ENCODE measurements at regions of chr4 and their contacts with region 1.

Region 1: DNA sequence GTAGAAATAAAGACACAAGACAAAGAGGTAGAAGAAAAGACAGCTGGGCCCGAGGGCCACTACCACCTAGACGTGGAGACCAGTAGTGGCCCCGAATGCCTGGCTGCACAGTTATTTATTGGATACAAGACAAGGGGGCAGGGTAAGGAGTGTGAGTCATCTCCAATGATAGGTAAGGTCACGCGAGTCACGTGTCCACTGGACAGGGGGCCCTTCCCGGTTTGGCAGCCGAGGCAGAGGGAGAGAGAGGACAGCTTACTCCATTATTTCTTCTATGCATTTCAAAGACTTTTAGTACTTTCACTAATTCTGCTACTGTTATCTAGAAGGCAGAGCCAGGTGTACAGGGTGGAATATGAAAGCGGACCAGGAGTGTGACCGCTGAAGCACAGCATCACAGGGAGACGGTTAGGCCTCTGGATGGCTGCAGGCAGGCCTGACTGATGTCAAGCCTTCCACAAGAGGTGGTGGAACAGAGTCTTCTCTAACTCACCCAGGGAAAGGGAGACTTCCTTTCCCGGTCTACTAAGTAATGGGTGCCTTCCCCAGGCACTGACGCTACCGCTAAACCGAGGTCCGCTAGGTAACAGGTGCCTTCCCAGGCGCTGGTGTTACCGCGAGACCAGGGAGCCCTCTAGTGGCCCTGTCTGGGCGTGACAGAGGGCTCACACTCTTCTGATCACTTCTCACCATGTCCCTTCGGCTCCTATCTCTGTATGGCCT is 44.9 kb downstream of the ZBTB49 start:
- DNase-seq: peak; percentile 52
- H3K4me3 ChIP-seq: no peak overlapping the region
- H3K27ac ChIP-seq: no peak overlapping the region
- H3K4me1 ChIP-seq: no peaks in the 10 kb centered on the region
- H3K27me3 ChIP-seq: peaks cover 0 to 3% of the 10 kb centered on the region in 2 experiments
- CTCF ChIP-seq: peak; percentile 66 to 87
- POLR2A ChIP-seq: no peak

Region 2: GRCh38 chr4:3640587-3640962 is 694.4 kb before region 1 on chr4:
- CTCF ChIA-PET with region 1: no interaction called
- POLR2A ChIA-PET with region 1: no interaction called
- dilution Hi-C with region 1: no loop called
- intact Hi-C with region 1: no loop called
- DNase-seq: no peak
- H3K4me3 ChIP-seq: no peak overlapping the region
- H3K27ac ChIP-seq: no peak overlapping the region
- H3K4me1 ChIP-seq: no peaks in the 10 kb centered on the region
- H3K27me3 ChIP-seq: no peaks in the 10 kb centered on the region
- CTCF ChIP-seq: no peak
- POLR2A ChIP-seq: no peak

Region 3: DNA sequence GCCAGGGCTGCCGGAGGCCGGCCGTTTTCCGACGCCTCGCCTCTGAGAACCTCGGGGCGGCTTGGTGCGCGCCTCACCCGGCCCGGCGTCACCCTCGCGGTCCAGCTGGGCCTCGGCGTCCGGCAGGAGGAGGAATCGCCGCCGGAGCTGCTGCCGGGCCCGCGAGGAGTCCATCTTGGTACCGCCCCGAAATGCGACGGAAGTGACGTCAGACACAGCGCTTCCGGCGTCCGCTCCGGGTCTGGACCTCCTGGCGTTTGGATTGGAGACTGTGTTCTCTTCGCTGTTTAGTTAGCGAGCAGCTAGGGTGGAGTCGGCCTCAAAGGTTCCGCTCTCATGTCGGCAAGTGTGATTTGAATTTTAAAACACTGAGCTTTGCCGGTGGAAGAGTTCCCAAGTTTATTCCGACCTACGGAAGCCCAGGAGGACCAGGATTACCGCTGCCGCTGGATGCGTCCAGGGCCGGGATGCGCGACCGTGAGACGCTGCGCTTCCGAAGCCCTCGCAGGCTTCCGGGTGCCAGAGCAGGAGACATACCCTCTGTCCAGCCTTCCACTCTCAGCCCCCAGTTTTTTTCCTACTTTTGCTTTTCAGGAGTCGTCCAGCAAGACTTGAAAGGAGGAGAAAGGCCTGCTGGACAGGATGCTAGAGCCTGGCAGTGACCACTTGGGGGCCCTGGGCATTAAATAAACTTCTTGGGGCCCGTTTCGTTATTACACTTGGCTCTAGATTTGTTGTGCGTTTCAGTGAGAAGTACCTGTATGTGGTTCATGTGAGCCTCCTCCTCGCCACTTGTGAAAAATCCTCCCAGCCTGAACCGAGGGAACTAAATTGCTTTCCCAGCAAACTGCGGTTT is 86.7 kb before region 1 on chr4 and contains the start of gene TMEM128:
- CTCF ChIA-PET with region 1: interaction called, 41 read pairs
- POLR2A ChIA-PET with region 1: no interaction called
- dilution Hi-C with region 1: no loop called
- intact Hi-C with region 1: loop called (anchors 1 kb)
- DNase-seq: peak; percentile 93
- H3K4me3 ChIP-seq: peak within 1 kb of the TSS; percentile 87 to 94 (median 88)
- H3K27ac ChIP-seq: peak within 1 kb of the TSS; percentile 99
- H3K4me1 ChIP-seq: peaks cover 14% of the 10 kb centered on the region
- H3K27me3 ChIP-seq: no peaks in the 10 kb centered on the region
- CTCF ChIP-seq: peak; percentile 16 to 34
- POLR2A ChIP-seq: peak; percentile 86
- total RNA-seq, gene TMEM128: 11.5 and 13.2 TPM in 2 replicates

Region 4: GRCh38 chr4:4254666-4255065 is 80.3 kb before region 1 on chr4:
- CTCF ChIA-PET with region 1: interaction called, 89 read pairs
- POLR2A ChIA-PET with region 1: no interaction called
- dilution Hi-C with region 1: no loop called
- intact Hi-C with region 1: loop called (anchors 1 kb)
- DNase-seq: no peak
- H3K4me3 ChIP-seq: no peak overlapping the region
- H3K27ac ChIP-seq: no peak overlapping the region
- H3K4me1 ChIP-seq: no peaks in the 10 kb centered on the region
- H3K27me3 ChIP-seq: no peaks in the 10 kb centered on the region
- CTCF ChIP-seq: no peak
- POLR2A ChIP-seq: no peak

Region 5: GRCh38 chr4:4260253-4260652 is 74.7 kb before region 1 on chr4:
- CTCF ChIA-PET with region 1: interaction called, 89 read pairs
- POLR2A ChIA-PET with region 1: interaction called, 3 read pairs
- dilution Hi-C with region 1: no loop called
- intact Hi-C with region 1: loop called (anchors 1 kb)
- DNase-seq: peak; percentile 50
- H3K4me3 ChIP-seq: no peak overlapping the region
- H3K27ac ChIP-seq: no peak overlapping the region
- H3K4me1 ChIP-seq: no peaks in the 10 kb centered on the region
- H3K27me3 ChIP-seq: no peaks in the 10 kb centered on the region
- CTCF ChIP-seq: peak; percentile 38 to 44
- POLR2A ChIP-seq: no peak

Region 6: GRCh38 chr4:4289941-4290850 is 44.8 kb before region 1 on chr4 and contains the starts of genes LYAR and ZBTB49:
- CTCF ChIA-PET with region 1: interaction called, 4 read pairs
- POLR2A ChIA-PET with region 1: no interaction called
- dilution Hi-C with region 1: no loop called
- intact Hi-C with region 1: loop called (anchors 2 kb)
- DNase-seq: peak; percentile 94
- H3K4me3 ChIP-seq: peak within 1 kb of the TSS; percentile 81 to 94 (median 89)
- H3K27ac ChIP-seq: peak within 1 kb of the TSS; percentile 41
- H3K4me1 ChIP-seq: peaks cover 17% of the 10 kb centered on the region
- H3K27me3 ChIP-seq: no peaks in the 10 kb centered on the region
- CTCF ChIP-seq: no peak
- POLR2A ChIP-seq: peak; percentile 78
- total RNA-seq, gene LYAR: 24.6 and 27.9 TPM in 2 replicates
- total RNA-seq, gene ZBTB49: 4.6 and 5.8 TPM in 2 replicates

Region 7: DNA sequence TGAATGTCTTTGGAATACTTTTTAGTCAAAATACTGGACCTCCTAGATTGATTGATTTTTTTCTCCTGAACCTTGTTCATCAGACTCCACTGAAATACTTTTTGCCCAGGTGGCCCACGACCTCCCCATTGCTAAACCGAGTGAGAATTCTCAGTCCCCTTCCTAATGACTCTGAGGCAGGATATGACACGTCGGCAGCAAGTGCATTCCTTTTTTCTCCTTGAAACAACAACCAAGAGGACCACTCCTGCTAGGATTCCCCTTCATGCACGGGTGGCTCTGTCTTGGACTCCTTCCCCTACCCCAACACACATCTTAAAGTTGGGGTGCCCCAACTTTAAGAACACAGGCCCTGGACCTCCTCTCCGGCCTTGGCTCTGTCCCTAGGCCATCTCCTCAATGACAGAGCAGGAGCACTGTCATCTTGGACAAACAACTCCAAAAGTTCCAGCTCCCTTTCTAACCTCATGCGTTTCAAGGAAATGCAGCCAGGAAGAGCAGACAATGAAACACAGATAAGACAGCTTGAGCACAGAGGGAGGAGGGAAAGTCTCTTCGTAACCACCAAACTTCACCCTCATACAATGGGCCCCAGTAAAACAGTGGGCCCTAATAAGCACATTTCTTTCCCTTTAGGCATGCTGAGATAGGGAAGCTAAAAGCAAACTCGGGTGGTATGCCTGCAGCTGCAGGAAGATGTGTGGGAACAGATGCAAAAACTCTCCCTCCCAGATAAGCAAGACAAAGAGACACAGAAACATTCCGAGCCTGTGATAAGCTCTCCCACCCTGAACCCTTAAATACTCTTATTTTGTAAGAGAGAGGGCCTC is 11.0 kb before region 1 on chr4:
- CTCF ChIA-PET with region 1: interaction called, 10 read pairs
- POLR2A ChIA-PET with region 1: no interaction called
- dilution Hi-C with region 1: no loop called
- intact Hi-C with region 1: no loop called
- DNase-seq: peak; percentile 64
- H3K4me3 ChIP-seq: peak overlapping the region in 1 of 3 experiments; percentile 25
- H3K27ac ChIP-seq: peak overlapping the region; percentile 96
- H3K4me1 ChIP-seq: peaks cover 16% of the 10 kb centered on the region
- H3K27me3 ChIP-seq: no peaks in the 10 kb centered on the region
- CTCF ChIP-seq: no peak
- POLR2A ChIP-seq: no peak